ENCODE measurements at regions of chr6 and their contacts with region 1.

Region 1: GRCh38 chr6:134657751-134658522 is 292.0 kb downstream of the ALDH8A1 start:
- DNase-seq: no peak
- ATAC-seq: no peak
- H3K4me3 ChIP-seq: no peak overlapping the region
- H3K27ac ChIP-seq: no peak overlapping the region
- H3K4me1 ChIP-seq: no peaks in the 10 kb centered on the region
- H3K27me3 ChIP-seq: peaks cover 8 to 18% of the 10 kb centered on the region in 2 experiments; a peak in 3 of 5 replicates
- CTCF ChIP-seq: no peak
- EP300 ChIP-seq: no peak
- POLR2A ChIP-seq: no peak
- RAD21 ChIP-seq: no peak

Region 2: DNA sequence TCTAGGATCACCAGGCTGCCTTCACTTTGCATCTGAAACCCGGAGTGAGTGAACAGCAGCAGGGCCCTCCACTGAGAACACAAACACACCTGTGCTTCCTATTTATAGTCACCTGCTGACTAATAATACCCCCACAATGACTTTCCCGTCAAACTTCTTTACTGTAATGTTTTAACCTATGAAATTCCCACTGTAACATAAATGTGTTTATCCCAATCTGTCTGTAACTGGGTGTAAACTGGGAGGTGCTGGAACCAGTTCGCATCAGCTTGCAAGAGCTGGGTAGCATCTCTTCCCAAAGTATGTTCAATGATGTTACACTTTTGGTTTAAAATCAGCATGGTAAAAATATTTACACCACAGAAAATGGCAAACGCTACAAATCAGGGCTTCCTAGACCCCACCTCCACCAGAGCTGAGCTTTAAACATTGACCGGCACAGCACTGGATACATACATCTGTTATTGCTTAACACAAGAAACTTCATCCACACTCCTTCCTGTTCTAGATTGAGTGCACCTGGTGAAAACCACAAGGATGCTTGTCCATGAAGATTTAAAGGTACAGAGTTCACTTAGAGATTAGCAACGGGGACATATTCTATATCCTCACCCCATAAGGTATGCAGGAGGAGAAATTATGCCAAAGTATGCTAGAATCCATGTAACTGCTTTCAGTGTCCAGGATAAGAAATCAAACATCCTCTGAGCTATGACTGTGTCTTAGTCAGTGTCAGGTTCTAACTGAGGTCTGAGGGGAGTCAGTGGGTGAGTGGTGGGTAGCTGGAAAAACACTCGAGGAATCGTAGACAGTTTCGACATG is 213.0 kb after region 1 on chr6:
- CTCF ChIA-PET with region 1: no interaction called
- POLR2A ChIA-PET with region 1: no interaction called
- in situ Hi-C with region 1: no loop called
- intact Hi-C with region 1: no loop called
- DNase-seq: no peak
- ATAC-seq: no peak; the same call in 2 of the 3 replicates
- H3K4me3 ChIP-seq: no peak overlapping the region
- H3K27ac ChIP-seq: no peak overlapping the region
- H3K4me1 ChIP-seq: no peaks in the 10 kb centered on the region; a peak in 1 of 5 replicates
- H3K27me3 ChIP-seq: peaks cover 6 to 14% of the 10 kb centered on the region in 2 experiments
- CTCF ChIP-seq: no peak
- EP300 ChIP-seq: no peak
- POLR2A ChIP-seq: no peak
- RAD21 ChIP-seq: no peak

Region 3: DNA sequence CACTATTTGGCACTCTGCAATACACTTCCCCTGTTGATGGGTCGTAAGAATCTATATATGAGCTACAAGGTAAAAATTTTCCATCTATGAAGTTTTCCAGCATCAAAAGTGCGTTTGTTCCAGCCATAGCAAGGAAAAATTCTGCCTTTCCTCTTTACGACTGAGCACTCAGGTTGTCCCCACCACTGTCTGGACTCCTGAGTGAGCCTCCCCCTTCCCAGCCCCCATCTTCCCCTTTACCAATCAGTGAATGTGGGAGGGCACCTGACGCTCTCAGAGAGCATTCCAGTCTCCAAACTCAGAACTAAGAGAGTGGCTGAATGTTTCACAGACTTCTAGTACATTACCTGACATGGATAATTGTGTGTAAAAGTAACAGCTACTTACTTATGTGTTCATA is 292.0 kb after region 1 on chr6 and contains the start of gene ALDH8A1:
- CTCF ChIA-PET with region 1: no interaction called
- POLR2A ChIA-PET with region 1: no interaction called
- in situ Hi-C with region 1: no loop called
- intact Hi-C with region 1: loop called (anchors 10 kb)
- DNase-seq: no peak
- ATAC-seq: peak; percentile 22; the same call in 1 of the 3 replicates
- H3K4me3 ChIP-seq: no peak within 1 kb of the TSS
- H3K27ac ChIP-seq: no peak within 1 kb of the TSS
- H3K4me1 ChIP-seq: no peaks in the 10 kb centered on the region; a peak in 1 of 5 replicates
- H3K27me3 ChIP-seq: no peaks in the 10 kb centered on the region
- CTCF ChIP-seq: no peak
- EP300 ChIP-seq: no peak
- POLR2A ChIP-seq: no peak
- RAD21 ChIP-seq: no peak
- polyA plus RNA-seq, gene ALDH8A1: 0.03 TPM in 1 of 2 experiments, not detected in the other

Measured in K562 (cell line).